ENCODE measurements at regions of chr17 and their contacts with region 1.

Region 1: DNA sequence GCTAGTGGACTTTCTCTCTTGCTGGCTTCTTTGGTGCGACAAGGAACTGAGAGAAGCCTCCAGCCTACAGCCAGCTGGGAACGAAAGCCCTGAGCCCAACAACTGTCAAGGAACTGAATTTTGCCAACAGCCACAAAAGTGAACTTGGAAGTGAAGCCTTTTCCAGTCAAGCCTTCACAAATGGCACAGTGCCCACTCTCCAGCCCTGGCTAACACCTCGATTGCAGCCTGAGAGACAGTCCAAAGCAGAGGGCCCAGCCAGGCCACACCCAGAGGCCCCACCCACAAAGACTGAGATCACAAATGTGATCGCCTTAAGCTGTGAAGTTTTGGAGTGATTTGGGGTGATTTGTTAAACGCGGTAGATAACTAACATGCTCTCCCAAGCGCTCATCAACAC is 244.6 kb upstream of the SDK2 start:
- ATAC-seq: peak in 3 of 8 experiments; percentile 37 to 80 (median 75)
- H3K4me3 ChIP-seq: no peak overlapping the region
- H3K27ac ChIP-seq: no peak overlapping the region
- H3K4me1 ChIP-seq: peaks cover 17 to 34% of the 10 kb centered on the region in 2 donors

Region 2: GRCh38 chr17:73798111-73798748 is 90.6 kb before region 1 on chr17:
- in situ Hi-C with region 1: loop called in 1 of 9 experiments (anchors 25 kb)
- ATAC-seq: peak in 6 of 8 experiments; percentile 19 to 92 (median 80)
- H3K4me3 ChIP-seq: no peak overlapping the region
- H3K27ac ChIP-seq: no peak overlapping the region
- H3K4me1 ChIP-seq: peaks cover 0 to 3% of the 10 kb centered on the region in 2 donors

Measured in motor neuron (in vitro differentiated cells).